Panc1 (cell line): ENCODE measurements at regions of chr16 and their contacts with region 1.

Region 1: GRCh38 chr16:72066747-72067146 is 3.7 kb downstream of the HPR start:
- DNase-seq: peak; percentile 15
- ATAC-seq: peak; percentile 68
- H3K4me3 ChIP-seq: no peak overlapping the region
- H3K27ac ChIP-seq: no peak overlapping the region
- H3K4me1 ChIP-seq: no peaks in the 10 kb centered on the region
- H3K27me3 ChIP-seq: no peaks in the 10 kb centered on the region
- CTCF ChIP-seq: peak; percentile 73

Region 2: GRCh38 chr16:71961066-71962039 is 105.4 kb before region 1 on chr16:
- CTCF ChIA-PET with region 1: interaction called, 11 read pairs
- POLR2A ChIA-PET with region 1: no interaction called
- in situ Hi-C with region 1: no loop called
- intact Hi-C with region 1: no loop called
- DNase-seq: peak; percentile 63
- ATAC-seq: peak; percentile 99
- H3K4me3 ChIP-seq: no peak overlapping the region
- H3K27ac ChIP-seq: no peak overlapping the region
- H3K4me1 ChIP-seq: no peaks in the 10 kb centered on the region
- H3K27me3 ChIP-seq: no peaks in the 10 kb centered on the region
- CTCF ChIP-seq: peak; percentile 87

Region 3: DNA sequence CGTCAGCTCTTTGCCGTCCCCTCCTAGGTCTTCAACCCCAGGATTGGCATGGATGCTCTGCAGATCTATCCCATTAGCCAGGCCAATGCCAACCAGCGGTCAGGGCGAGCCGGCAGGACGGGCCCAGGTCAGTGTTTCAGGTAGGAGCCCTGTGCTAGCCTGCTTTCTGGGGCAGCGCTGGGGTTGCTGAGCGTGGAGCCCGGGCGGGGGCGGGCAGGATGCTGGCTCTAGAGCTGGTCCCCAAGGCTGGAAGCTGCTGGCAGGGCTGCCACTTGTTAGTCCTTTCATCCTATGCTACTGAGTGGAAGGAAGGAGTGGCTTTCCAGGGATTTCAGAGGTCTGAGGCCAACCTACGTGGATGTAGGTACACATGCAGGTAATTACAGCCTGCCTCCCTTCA is 39.2 kb after region 1 on chr16:
- CTCF ChIA-PET with region 1: no interaction called
- POLR2A ChIA-PET with region 1: no interaction called
- in situ Hi-C with region 1: no loop called
- intact Hi-C with region 1: loop called (anchors 5 kb)
- DNase-seq: no peak
- ATAC-seq: no peak
- H3K4me3 ChIP-seq: no peak overlapping the region
- H3K27ac ChIP-seq: no peak overlapping the region
- H3K4me1 ChIP-seq: no peaks in the 10 kb centered on the region
- H3K27me3 ChIP-seq: no peaks in the 10 kb centered on the region
- CTCF ChIP-seq: no peak

Region 4: GRCh38 chr16:73058221-73058615 is 991.5 kb after region 1 on chr16:
- CTCF ChIA-PET with region 1: interaction called, 10 read pairs
- POLR2A ChIA-PET with region 1: no interaction called
- in situ Hi-C with region 1: no loop called
- intact Hi-C with region 1: no loop called
- DNase-seq: no peak
- ATAC-seq: peak; percentile 57; the same call in 1 of the 2 replicates
- H3K4me3 ChIP-seq: peak overlapping the region in 1 of 2 experiments; percentile 51; a peak in 3 of 4 replicates
- H3K27ac ChIP-seq: no peak overlapping the region
- H3K4me1 ChIP-seq: peaks cover 14% of the 10 kb centered on the region
- H3K27me3 ChIP-seq: no peaks in the 10 kb centered on the region
- CTCF ChIP-seq: no peak